ENCODE measurements at regions of chr17 and their contacts with region 1.

Region 1: DNA sequence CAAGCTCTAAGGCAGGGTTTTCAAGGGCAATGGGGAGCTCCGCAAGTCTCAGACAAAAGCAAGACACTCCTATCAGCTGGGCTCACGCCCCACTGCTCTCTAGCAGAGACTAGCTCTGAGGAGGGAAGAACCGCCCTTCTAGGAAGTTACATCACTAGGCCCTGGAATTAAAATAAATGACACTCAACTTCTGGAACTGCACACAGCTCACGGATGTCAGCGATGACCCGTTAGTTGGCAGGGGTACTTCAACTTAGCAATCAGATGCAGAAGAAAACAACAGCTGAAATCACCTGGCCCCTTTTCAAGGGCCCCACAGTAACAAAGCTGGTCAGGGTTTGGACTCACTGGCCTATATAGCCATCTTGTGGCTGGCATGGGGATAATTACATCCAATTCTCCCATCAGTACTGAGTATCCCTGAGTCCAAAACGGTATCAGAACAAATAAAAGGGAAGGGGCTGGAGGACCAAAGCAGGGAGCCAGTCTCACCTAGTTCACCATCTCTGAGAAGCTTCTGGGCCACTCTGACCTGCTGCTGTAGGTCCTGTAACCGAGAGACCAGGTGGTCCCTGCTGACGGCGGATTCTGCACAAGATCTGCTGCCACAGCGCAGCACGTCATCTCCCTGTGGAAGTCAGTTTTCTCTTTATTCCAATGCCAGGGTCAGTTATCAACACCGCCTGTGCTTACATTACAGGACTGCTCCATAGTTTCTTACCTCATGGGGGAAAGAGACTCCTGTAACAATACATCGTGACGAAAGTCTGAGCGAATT is 22.2 kb downstream of the SERPINF1 start:
- DNase-seq: peak; percentile 74
- H3K4me3 ChIP-seq: no peak overlapping the region
- H3K27ac ChIP-seq: peak overlapping the region; percentile 90 to 94 (median 92)
- H3K4me1 ChIP-seq: peaks cover 20 to 86% (median 47%) of the 10 kb centered on the region in 4 donors
- H3K27me3 ChIP-seq: no peaks in the 10 kb centered on the region
- CTCF ChIP-seq: peak; percentile 54 to 86 (median 63)
- EP300 ChIP-seq: peak; percentile 33
- POLR2A ChIP-seq: peak; percentile 58

Region 2: GRCh38 chr17:1374431-1375177 is 409.4 kb before region 1 on chr17:
- in situ Hi-C with region 1: no loop called
- intact Hi-C with region 1: no loop called
- DNase-seq: no peak
- H3K4me3 ChIP-seq: no peak overlapping the region
- H3K27ac ChIP-seq: peak overlapping the region; percentile 12 to 80 (median 73)
- H3K4me1 ChIP-seq: peaks cover 56 to 92% (median 73%) of the 10 kb centered on the region in 4 donors
- H3K27me3 ChIP-seq: no peaks in the 10 kb centered on the region
- CTCF ChIP-seq: no peak
- EP300 ChIP-seq: no peak
- POLR2A ChIP-seq: no peak

Region 3: GRCh38 chr17:1724506-1725362 is 59.3 kb before region 1 on chr17 and contains the start of gene WDR81:
- in situ Hi-C with region 1: loop called in 2 of 4 experiments (anchors 10 kb)
- intact Hi-C with region 1: loop called (anchors 5 kb)
- DNase-seq: peak; percentile 94
- H3K4me3 ChIP-seq: peak within 1 kb of the TSS; percentile 68 to 87 (median 82)
- H3K27ac ChIP-seq: peak within 1 kb of the TSS; percentile 82 to 89 (median 88)
- H3K4me1 ChIP-seq: peaks cover 13 to 51% (median 28%) of the 10 kb centered on the region in 4 donors
- H3K27me3 ChIP-seq: no peaks in the 10 kb centered on the region
- CTCF ChIP-seq: no peak
- EP300 ChIP-seq: no peak
- POLR2A ChIP-seq: no peak
- total RNA-seq, gene WDR81: 26.1 to 73.7 (median 35.7) TPM